Colonic mucosa (tissue), 4 donors: ENCODE measurements at regions of chr13 and their contacts with region 1.

Region 1: GRCh38 chr13:29707876-29708543 is 112.5 kb upstream of the SLC7A1 start:
- DNase-seq: peak; percentile 35
- H3K4me3 ChIP-seq: no peak overlapping the region
- H3K27ac ChIP-seq: no peak overlapping the region
- H3K4me1 ChIP-seq: no peaks in the 10 kb centered on the region
- H3K27me3 ChIP-seq: no peaks in the 10 kb centered on the region
- CTCF ChIP-seq: peak; percentile 53

Region 2: DNA sequence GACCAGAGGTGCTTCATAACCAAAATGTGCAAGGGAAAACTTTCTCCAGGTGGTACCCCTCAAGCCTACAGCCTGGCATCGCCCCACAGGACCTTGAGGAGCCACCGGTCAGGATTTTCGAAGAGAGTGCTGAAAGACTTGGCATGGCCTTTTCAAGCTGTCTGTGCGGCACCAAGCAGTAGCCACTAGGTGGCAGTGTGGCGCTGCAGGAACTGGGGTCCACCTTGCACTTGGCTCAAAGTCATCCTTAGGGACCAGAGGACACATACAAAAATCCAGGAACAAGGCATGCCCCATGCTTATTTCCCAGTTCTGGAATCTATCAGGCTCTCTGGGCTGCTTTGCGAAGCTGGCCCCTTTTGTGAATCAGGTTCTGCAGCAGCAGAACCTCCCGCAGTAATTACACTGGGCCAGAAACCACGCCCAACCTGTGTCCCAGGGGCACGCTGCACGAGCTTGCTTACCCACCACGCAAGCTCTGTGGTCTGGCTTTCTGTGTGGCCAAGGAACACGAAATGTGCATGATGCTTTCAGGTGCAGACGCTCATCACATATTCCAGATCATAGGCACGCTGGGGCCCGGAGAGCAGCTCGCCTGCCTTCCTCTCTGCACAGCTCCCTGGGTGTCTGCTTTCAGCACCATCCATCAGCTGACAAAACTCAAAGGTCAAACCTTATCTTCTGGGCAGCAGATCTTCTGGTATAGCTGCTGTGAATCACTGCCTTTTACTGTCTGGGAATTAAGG is 199.7 kb before region 1 on chr13:
- intact Hi-C with region 1: loop called (anchors 2 kb)
- DNase-seq: peak; percentile 86
- H3K4me3 ChIP-seq: no peak overlapping the region
- H3K27ac ChIP-seq: no peak overlapping the region
- H3K4me1 ChIP-seq: peaks cover 8% of the 10 kb centered on the region
- H3K27me3 ChIP-seq: no peaks in the 10 kb centered on the region
- CTCF ChIP-seq: peak; percentile 97